Activated T-helper 2 cell treated with anti-CD3 and anti-CD28 coated beads, Interferon-gamma antibody, Interleukin-2, Interleukin-4, amounts not matched to agents 10 μg/mL and 5 μg/mL and 100 μg/mL, durations not matched to agents 14 hours and 24 hours and 36 hours (primary cell): ENCODE measurements at regions of chr19 and their contacts with region 1.

Region 1: GRCh38 chr19:2977001-2977685 is at the start of gene TLE6:
- DNase-seq: peak; percentile 92
- H3K4me3 Mint-ChIP-seq: peak within 1 kb of the TSS; percentile 90
- H3K27ac Mint-ChIP-seq: peak within 1 kb of the TSS; percentile 85
- H3K4me1 Mint-ChIP-seq: peaks cover 18% of the 10 kb centered on the region
- H3K27me3 Mint-ChIP-seq: peaks cover 12% of the 10 kb centered on the region
- total RNA-seq, gene TLE6: 1.4 and 1.5 TPM in 2 replicates

Region 2: GRCh38 chr19:2739602-2740313 is 237.4 kb before region 1 on chr19 and contains the start of gene SLC39A3:
- intact Hi-C with region 1: no loop called
- DNase-seq: peak; percentile 99
- H3K4me3 Mint-ChIP-seq: peak within 1 kb of the TSS; percentile 95
- H3K27ac Mint-ChIP-seq: peak within 1 kb of the TSS; percentile 76
- H3K4me1 Mint-ChIP-seq: peaks cover 14% of the 10 kb centered on the region
- H3K27me3 Mint-ChIP-seq: peaks cover 11% of the 10 kb centered on the region
- total RNA-seq, gene SLC39A3: 39.1 and 39.4 TPM in 2 replicates

Region 3: DNA sequence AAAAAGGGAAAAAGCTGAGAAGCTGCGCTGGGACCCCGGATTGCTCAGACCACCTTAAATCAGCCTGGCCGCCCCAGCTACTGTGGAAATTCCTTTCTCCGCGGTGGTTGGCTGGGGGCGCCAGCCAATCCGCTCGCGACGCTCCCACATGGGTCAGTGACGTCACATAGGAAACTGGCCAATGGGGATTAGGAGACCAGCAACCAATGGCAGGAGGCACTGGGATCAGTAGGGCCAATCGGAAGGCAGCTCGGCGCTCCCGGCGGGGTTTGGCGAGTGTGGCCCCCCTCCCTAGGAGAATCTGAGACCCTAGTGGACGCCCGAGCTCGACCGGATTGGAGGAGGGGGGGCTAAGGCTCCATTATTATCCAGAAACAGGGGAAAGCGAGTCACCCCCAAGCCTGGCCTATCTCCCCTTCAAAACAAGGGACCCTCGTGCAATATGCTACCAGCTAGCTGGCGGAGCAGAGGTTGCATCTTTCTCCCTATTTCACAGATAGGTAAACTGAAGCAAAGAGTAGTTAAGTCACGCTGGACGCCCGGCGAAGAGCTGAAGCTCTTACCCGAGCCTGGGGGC is 58.5 kb after region 1 on chr19:
- intact Hi-C with region 1: loop called (anchors 1 kb)
- DNase-seq: peak; percentile 94
- H3K4me3 Mint-ChIP-seq: peak overlapping the region; percentile 91
- H3K27ac Mint-ChIP-seq: peak overlapping the region; percentile 95
- H3K4me1 Mint-ChIP-seq: peaks cover 15% of the 10 kb centered on the region
- H3K27me3 Mint-ChIP-seq: peaks cover 28% of the 10 kb centered on the region